PC-3 (cell line): ENCODE measurements at regions of chr3 and their contacts with region 1.

Region 1: GRCh38 chr3:138468886-138469285 is 34.5 kb downstream of the ESYT3 start:
- DNase-seq: peak; percentile 77
- ATAC-seq: peak; percentile 88
- H3K4me3 ChIP-seq: no peak overlapping the region
- H3K27ac ChIP-seq: peak overlapping the region; percentile 63
- H3K4me1 ChIP-seq: peaks cover 32% of the 10 kb centered on the region
- H3K27me3 ChIP-seq: no peaks in the 10 kb centered on the region
- CTCF ChIP-seq: no peak

Region 2: DNA sequence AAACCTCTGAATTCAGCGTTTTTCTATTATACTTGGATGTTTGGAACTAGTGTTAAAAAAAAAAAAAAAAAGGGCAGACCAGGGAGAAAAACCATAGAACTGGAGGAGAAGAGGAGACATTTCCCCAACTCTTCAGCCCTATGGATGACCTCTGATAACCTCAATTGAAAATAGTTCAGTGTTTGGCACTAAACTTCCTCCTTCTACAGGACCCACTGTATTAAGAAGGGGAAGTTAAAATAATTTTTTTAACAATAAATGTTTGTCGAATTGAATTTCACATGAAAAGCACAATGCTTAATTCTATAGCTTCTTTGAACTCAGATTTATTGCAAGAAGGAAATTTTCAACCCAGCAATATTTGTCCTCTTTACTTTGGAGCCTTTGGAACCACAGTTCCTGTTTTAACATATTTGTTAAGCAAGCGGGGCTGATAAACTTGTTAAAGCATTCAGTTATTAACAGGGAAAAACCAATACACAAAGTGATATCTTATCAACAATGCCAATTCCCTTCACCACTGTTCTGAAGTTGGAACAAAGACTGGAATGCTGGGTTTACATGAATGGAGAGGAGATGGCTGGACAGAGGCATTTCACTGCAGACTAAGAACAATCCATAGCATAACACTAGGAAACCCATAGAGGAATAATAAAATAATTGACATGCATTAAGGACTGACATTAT is 333.6 kb before region 1 on chr3:
- CTCF ChIA-PET with region 1: no interaction called
- POLR2A ChIA-PET with region 1: no interaction called
- intact Hi-C with region 1: no loop called
- DNase-seq: no peak
- ATAC-seq: no peak
- H3K4me3 ChIP-seq: no peak overlapping the region
- H3K27ac ChIP-seq: no peak overlapping the region
- H3K4me1 ChIP-seq: no peaks in the 10 kb centered on the region
- H3K27me3 ChIP-seq: no peaks in the 10 kb centered on the region
- CTCF ChIP-seq: no peak

Region 3: DNA sequence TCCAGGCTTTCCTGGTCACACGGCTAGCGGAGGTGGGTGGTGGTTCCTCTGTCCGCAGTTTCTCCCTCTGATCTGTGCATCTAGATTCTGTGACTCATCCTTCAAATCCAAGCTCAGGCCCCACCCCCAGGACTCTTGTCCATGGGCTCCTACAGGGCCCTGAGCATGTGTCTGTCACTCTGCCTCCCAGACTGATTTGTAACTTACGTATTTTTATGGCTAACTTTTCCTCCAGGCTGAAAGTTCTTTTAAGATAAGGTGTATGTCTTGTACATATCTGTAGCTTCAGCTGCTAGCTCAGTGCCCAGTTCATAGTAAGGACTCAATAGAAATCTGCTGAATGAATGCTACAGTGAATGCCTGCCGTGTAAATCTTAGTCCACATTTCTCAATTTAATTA is 26.5 kb before region 1 on chr3:
- CTCF ChIA-PET with region 1: no interaction called
- POLR2A ChIA-PET with region 1: no interaction called
- intact Hi-C with region 1: no loop called
- DNase-seq: peak; percentile 67
- ATAC-seq: peak; percentile 98
- H3K4me3 ChIP-seq: no peak overlapping the region
- H3K27ac ChIP-seq: no peak overlapping the region
- H3K4me1 ChIP-seq: peaks cover 10% of the 10 kb centered on the region
- H3K27me3 ChIP-seq: no peaks in the 10 kb centered on the region
- CTCF ChIP-seq: no peak

Region 4: GRCh38 chr3:138493804-138494606 is 25.1 kb after region 1 on chr3:
- CTCF ChIA-PET with region 1: no interaction called
- POLR2A ChIA-PET with region 1: no interaction called
- intact Hi-C with region 1: loop called (anchors 1 kb)
- DNase-seq: peak; percentile 75
- ATAC-seq: peak; percentile 92
- H3K4me3 ChIP-seq: no peak overlapping the region
- H3K27ac ChIP-seq: peak overlapping the region; percentile 82
- H3K4me1 ChIP-seq: peaks cover 27% of the 10 kb centered on the region
- H3K27me3 ChIP-seq: no peaks in the 10 kb centered on the region
- CTCF ChIP-seq: no peak

Region 5: DNA sequence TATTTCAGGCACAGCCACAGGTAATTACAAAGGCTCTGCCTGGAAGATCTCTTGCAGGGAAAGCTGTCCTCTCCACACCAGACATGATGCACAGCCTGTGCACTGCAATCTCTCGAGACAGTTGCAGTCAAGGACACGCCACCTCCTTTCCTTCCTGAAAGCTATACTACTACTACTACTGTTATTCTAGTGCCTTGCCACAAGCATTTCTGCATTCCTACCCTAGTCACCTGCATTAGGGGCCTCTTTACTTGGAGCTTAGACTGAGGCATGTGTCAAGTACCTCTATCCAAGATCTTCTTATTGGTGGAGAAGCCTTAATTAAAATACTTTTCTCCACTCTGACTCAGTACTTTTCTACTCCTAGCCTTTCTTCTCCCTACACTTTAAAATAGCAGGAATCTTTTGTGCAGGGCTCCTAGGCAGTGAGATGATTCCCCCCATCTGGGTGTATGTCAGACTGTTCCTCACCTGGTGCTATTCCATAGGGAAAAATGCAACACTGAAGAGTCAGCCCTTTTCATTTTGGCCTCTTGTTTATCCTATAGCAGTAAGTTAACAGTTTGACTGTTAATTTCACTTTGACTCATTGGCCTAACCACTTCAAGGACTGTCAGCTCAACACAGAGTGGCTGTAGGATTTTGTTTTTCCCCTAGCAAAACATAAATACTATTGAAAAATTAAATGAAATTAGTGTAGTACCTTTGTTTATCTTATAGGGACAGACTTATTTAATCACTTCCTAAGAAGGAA is 44.4 kb after region 1 on chr3:
- CTCF ChIA-PET with region 1: no interaction called
- POLR2A ChIA-PET with region 1: no interaction called
- intact Hi-C with region 1: no loop called
- DNase-seq: no peak
- ATAC-seq: no peak
- H3K4me3 ChIP-seq: no peak overlapping the region
- H3K27ac ChIP-seq: no peak overlapping the region
- H3K4me1 ChIP-seq: peaks cover 10% of the 10 kb centered on the region; the same call in 1 of the 2 replicates
- H3K27me3 ChIP-seq: no peaks in the 10 kb centered on the region
- CTCF ChIP-seq: no peak

Region 6: DNA sequence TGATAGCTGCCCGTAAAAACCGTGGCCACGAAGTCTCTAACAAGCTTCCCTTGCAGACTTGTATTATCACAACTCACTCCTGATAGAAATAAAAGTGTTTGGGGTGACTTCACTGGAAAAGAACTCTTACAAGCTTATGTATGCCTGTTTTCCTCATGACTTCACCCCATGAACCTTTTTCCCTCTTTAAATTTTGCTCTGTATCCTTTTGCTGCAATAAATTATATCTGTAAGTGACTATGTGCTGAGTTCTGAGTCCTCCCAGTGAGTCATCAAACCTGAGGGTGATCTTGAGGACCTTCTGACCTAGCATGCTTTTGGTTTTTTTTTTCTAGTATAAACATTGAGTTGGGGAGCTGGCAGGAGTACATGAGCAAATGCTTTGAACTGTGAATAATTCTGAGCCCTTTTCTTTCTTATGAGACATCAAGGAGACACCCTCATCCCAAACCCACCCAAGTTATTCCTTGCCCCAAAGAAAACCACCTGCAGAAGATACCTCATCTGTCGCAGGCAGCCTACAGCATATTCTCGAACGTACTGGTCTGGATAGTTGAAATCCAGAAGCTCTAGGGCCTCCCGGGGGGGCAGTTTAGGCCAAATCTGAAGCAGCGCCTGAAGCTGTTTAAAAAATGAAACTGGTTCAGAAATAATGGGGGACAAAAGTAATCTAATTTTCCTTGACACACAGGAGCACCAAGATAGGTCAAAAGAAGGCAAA is 225.6 kb after region 1 on chr3:
- CTCF ChIA-PET with region 1: no interaction called
- POLR2A ChIA-PET with region 1: no interaction called
- intact Hi-C with region 1: loop called (anchors 10 kb)
- DNase-seq: peak; percentile 76
- ATAC-seq: peak; percentile 92
- H3K4me3 ChIP-seq: no peak overlapping the region
- H3K27ac ChIP-seq: peak overlapping the region; percentile 62
- H3K4me1 ChIP-seq: peaks cover 15% of the 10 kb centered on the region
- H3K27me3 ChIP-seq: no peaks in the 10 kb centered on the region
- CTCF ChIP-seq: no peak